ENCODE measurements at regions of chr9 and their contacts with region 1.

Region 1: GRCh38 chr9:14277244-14277643 is 36.7 kb downstream of the NFIB start:
- DNase-seq: peak; percentile 32
- H3K4me3 Mint-ChIP-seq: peak overlapping the region; percentile 51
- H3K27ac Mint-ChIP-seq: peak overlapping the region; percentile 63
- H3K4me1 Mint-ChIP-seq: peaks cover 59% of the 10 kb centered on the region
- H3K27me3 Mint-ChIP-seq: no peaks in the 10 kb centered on the region
- CTCF ChIP-seq: no peak

Region 2: DNA sequence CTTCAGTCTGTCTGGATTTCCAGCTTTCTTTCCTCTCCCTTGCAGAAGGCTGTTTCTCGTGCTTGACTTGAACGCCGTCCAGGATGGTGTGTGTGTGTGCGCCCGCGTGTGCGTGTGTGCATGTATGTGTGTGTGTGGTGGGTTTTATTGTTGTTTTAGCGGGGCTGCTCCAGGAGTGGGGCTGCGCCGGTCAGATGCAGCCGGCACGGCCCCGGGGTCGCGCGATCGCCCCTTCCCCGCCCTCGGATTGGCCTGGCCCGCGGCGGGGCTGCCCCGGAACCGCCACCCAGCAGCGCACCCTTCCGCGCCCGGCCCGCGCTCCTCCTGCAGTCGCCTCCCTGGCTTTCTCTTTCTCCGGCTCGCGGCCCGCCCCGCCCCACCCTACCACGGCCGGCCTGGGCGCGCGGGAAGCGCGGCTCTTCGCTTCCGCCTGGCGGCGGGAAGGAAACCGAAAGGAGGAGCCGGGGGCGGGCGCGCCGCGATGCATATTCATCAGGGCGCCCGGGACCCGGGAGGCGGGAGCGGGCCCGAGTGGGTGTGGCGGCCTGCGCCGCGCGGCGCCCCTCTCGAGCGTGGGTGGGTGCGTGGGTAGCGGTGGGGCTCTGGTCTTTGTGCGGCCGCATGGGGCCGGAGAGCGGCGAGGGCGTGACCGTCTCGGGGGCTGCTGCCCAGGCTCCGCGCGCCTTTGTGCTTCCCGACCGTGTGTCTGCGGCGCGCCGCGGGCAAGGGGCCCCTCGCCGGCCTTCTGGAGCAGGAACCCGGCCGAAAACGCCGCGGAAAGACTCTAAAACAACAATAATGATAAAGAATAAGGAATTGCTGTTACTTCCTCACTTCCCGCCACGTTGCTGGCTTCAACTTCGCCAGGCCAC is 45.2 kb after region 1 on chr9:
- CTCF ChIA-PET with region 1: no interaction called
- intact Hi-C with region 1: loop called (anchors 5 kb)
- DNase-seq: peak; percentile 88
- H3K4me3 Mint-ChIP-seq: peak overlapping the region; percentile 70
- H3K27ac Mint-ChIP-seq: peak overlapping the region; percentile 70
- H3K4me1 Mint-ChIP-seq: peaks cover 31% of the 10 kb centered on the region
- H3K27me3 Mint-ChIP-seq: no peaks in the 10 kb centered on the region
- CTCF ChIP-seq: peak; percentile 28